ENCODE measurements at regions of chr1 and their contacts with region 1.

Region 1: GRCh38 chr1:180851995-180852887 is 60.5 kb upstream of the KIAA1614 start:
- DNase-seq: no peak
- H3K4me3 ChIP-seq: no peak overlapping the region
- H3K27ac ChIP-seq: no peak overlapping the region
- H3K4me1 ChIP-seq: peaks cover 30% of the 10 kb centered on the region
- H3K27me3 ChIP-seq: no peaks in the 10 kb centered on the region
- CTCF ChIP-seq: no peak

Region 2: GRCh38 chr1:180631766-180632325 is 220.4 kb before region 1 on chr1 and contains the start of gene XPR1:
- intact Hi-C with region 1: loop called (anchors 10 kb)
- DNase-seq: peak; percentile 98
- H3K4me3 ChIP-seq: peak within 1 kb of the TSS; percentile 80
- H3K27ac ChIP-seq: peak within 1 kb of the TSS; percentile 96
- H3K4me1 ChIP-seq: peaks cover 66% of the 10 kb centered on the region
- H3K27me3 ChIP-seq: no peaks in the 10 kb centered on the region
- CTCF ChIP-seq: peak; percentile 59
- total RNA-seq, gene XPR1: 60.4 TPM

Region 3: GRCh38 chr1:180672105-180672504 is 180.1 kb before region 1 on chr1:
- intact Hi-C with region 1: no loop called
- DNase-seq: no peak
- H3K4me3 ChIP-seq: no peak overlapping the region
- H3K27ac ChIP-seq: no peak overlapping the region
- H3K4me1 ChIP-seq: peaks cover 20% of the 10 kb centered on the region
- H3K27me3 ChIP-seq: no peaks in the 10 kb centered on the region
- CTCF ChIP-seq: no peak